Activated naive CD8-positive, alpha-beta T cell treated with anti-CD3 and anti-CD28 coated beads, Interleukin-2, amount 10 ng/mL, durations not matched to agents 7 days and 5 days (primary cell): ENCODE measurements at regions of chr6 and their contacts with region 1.

Region 1: GRCh38 chr6:109455502-109456282 is at the start of gene MICAL1:
- DNase-seq: peak; percentile 87
- ATAC-seq: peak; percentile 67
- H3K4me3 Mint-ChIP-seq: peak within 1 kb of the TSS; percentile 95
- H3K27ac Mint-ChIP-seq: peak within 1 kb of the TSS; percentile 97
- H3K4me1 Mint-ChIP-seq: peaks cover 48% of the 10 kb centered on the region
- H3K27me3 Mint-ChIP-seq: no peaks in the 10 kb centered on the region
- total RNA-seq, gene MICAL1: 80.4 to 81.5 TPM

Region 2: DNA sequence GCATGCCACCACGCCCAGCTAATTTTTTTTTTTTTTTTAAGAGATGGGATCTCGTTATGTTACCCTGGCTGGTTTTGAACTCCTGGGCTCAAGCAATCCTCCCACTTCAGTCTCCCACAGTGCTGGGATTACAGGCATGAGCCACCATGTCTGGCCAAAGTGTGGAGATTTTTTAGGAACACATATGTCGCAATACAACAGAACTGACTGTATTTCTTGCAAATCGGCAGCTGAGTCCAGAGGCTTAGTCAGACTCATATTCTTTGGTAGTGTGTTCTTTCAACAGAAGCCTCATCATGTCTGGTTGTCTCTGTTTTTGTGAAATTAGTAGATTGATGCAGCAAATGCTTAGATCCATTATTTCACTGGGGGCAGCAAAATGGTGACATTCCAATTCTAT is 49.5 kb before region 1 on chr6:
- POLR2A ChIA-PET with region 1: no interaction called
- DNase-seq: no peak
- ATAC-seq: no peak
- H3K4me3 Mint-ChIP-seq: no peak overlapping the region
- H3K27ac Mint-ChIP-seq: no peak overlapping the region
- H3K4me1 Mint-ChIP-seq: no peaks in the 10 kb centered on the region
- H3K27me3 Mint-ChIP-seq: peaks cover 7% of the 10 kb centered on the region

Region 3: DNA sequence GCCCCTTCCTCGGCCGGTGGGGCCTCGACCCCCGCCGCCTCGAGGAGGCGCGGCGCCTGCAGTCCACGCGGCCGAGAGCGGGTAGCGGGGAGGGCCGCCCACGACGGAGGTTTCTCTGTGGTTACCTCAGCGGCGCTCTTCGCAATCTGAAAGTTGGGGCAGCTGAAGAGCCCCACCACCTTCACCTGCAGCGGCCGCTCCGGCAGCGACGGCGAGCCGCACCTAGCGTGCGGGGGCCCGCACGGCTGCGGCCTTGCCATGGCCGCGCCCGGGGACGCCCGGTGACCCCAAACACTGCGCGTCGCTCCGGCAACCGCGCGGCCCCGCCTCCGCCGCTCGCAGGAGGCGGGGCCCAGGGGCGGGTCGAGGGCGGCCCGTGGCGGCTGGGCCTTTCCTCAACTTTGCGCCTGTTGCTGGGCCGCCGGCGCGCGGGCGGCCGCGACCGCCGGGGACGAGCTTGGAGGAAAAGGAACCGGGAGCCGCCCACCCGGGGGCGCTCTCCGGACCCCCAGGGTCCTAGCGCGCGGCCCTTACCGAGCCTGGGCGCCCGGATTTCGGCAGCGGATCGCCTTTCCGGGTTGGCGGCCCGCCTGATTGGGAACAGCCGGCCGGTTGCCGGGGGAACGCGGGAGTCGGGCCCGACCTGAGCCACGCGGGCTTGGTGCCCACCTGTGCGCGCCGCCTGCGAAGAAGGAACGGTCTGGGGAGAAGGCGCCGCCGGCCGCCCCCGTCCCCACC is 15.2 kb before region 1 on chr6 and contains the starts of genes PPIL6 and SMPD2:
- POLR2A ChIA-PET with region 1: interaction called, 84 read pairs
- DNase-seq: peak; percentile 88
- ATAC-seq: peak; percentile 85
- H3K4me3 Mint-ChIP-seq: peak within 1 kb of the TSS; percentile 93
- H3K27ac Mint-ChIP-seq: peak within 1 kb of the TSS; percentile 80
- H3K4me1 Mint-ChIP-seq: peaks cover 16% of the 10 kb centered on the region
- H3K27me3 Mint-ChIP-seq: no peaks in the 10 kb centered on the region
- total RNA-seq, gene PPIL6: 0.17 to 0.53 TPM
- total RNA-seq, gene SMPD2: 15.6 to 16.6 TPM

Region 4: DNA sequence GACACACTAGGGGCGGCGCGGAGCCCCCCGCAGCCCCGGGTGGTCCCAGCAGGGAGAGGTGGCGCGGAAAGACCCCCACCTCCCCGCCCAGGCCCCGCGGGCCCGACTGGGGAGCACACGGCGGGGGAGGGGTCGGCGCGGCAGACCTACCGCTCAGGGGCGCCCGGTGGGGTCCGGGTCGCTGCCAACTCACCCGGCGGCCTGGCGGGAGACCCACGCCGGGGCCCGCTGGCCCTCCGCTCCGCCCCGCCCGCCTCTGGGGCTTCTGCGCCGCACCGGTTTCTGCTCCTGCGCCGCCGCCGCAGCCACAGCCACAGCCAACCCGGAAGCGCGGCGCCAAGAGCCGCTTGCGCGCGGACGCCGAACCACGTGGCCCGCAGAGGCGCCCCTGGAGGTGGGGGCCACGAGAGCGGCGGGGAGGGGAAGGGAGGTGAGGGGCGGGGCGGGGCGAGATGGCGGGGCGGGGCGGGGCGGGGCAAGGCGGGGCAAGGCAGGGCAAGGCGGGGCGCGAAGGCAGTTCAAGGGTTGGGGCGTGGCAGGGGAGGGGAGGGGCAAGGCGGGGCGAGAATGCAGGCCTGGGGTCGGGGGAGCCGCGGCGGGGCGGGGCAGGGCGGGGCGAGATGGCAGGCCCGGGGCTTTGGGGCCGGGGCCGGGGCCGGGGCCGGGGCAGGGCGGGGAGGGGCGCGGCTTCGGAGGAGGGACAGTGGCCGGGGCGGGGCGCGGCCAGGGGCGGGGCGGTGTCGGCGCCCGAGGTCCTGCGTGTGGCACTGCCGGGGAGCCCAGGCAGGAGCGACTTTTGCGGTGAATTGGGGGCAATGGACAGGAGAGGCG is 27.4 kb after region 1 on chr6 and contains the start of gene ZBTB24:
- POLR2A ChIA-PET with region 1: interaction called, 92 read pairs
- DNase-seq: peak; percentile 94
- ATAC-seq: peak; percentile 84
- H3K4me3 Mint-ChIP-seq: peak within 1 kb of the TSS; percentile 93
- H3K27ac Mint-ChIP-seq: peak within 1 kb of the TSS; percentile 89
- H3K4me1 Mint-ChIP-seq: peaks cover 40% of the 10 kb centered on the region
- H3K27me3 Mint-ChIP-seq: peaks cover 8% of the 10 kb centered on the region
- total RNA-seq, gene ZBTB24: 19.7 to 20.0 TPM

Region 5: DNA sequence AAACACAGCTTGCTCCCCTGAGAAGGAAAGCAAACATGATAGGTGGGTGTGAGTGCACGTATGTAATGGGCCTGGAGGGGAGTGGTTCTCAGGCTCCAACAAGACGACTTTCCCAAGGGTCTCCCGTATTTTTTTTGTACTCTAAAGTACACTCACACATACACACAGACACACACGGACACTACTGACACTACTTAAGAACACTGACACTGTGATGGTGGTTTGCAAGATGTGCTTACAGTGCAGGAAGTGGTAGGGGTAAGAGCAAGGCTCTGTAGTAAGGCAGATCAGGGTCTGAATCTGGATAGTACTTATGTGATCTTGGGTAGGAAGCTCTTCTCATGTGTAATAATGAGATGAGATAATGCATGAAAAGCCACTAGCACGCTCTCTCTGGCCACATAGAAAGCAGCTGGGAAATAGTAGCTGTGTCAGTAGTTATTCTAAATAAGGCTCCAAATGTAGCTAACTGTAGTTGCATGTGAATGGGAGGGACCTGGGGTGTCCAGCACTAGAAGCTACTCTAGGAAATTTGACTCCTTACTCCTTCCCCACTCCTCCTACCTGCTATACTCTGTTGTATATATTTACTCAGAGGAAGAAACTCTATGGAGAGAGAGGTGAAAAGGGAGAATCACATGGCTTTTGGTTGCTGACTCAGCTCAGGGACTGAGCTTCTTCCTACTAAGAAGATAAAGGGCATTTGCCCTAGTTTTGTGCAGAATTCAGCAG is 35.7 kb after region 1 on chr6:
- POLR2A ChIA-PET with region 1: interaction called, 16 read pairs
- DNase-seq: peak; percentile 38
- ATAC-seq: peak; percentile 100
- H3K4me3 Mint-ChIP-seq: peak overlapping the region; percentile 63
- H3K27ac Mint-ChIP-seq: peak overlapping the region; percentile 92
- H3K4me1 Mint-ChIP-seq: peaks cover 26% of the 10 kb centered on the region
- H3K27me3 Mint-ChIP-seq: peaks cover 10% of the 10 kb centered on the region